Caco-2 (cell line): ENCODE measurements at regions of chr7 and their contacts with region 1.

Region 1: DNA sequence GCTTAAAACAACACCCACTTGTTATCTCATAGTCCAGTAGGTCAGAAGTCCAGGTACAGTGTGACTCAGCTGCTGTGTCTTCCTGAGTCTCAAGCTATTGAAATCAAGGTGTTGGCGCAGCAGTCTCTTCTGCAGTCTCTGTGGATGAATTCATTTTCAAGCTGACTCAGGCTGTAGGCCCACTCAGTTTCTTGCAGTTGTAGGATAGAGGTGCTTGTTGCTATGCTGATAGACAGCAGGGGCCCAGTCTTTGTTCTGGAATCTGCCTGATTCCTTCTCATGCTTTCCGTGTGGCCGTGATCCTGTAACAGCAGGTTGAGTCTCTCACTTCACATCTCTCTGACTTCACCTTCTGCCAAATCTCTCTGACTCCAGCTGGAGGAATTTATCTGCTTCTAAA is 400.4 kb upstream of the POM121L12 start:
- DNase-seq: peak; percentile 59 to 68
- H3K4me3 ChIP-seq: no peak overlapping the region
- H3K4me3 Mint-ChIP-seq: peak overlapping the region; percentile 53
- H3K27ac Mint-ChIP-seq: peak overlapping the region; percentile 75
- H3K4me1 ChIP-seq: peaks cover 12% of the 10 kb centered on the region; the same call in 1 of the 2 replicates
- H3K4me1 Mint-ChIP-seq: peaks cover 20% of the 10 kb centered on the region
- H3K27me3 ChIP-seq: no peaks in the 10 kb centered on the region
- H3K27me3 Mint-ChIP-seq: no peaks in the 10 kb centered on the region
- CTCF ChIP-seq: no peak

Region 2: GRCh38 chr7:52620849-52621248 is 14.2 kb before region 1 on chr7:
- CTCF ChIA-PET with region 1: no interaction called
- POLR2A ChIA-PET with region 1: no interaction called
- intact Hi-C with region 1: no loop called
- DNase-seq: no peak
- H3K4me3 ChIP-seq: no peak overlapping the region
- H3K4me3 Mint-ChIP-seq: no peak overlapping the region
- H3K27ac Mint-ChIP-seq: no peak overlapping the region
- H3K4me1 ChIP-seq: no peaks in the 10 kb centered on the region
- H3K4me1 Mint-ChIP-seq: no peaks in the 10 kb centered on the region
- H3K27me3 ChIP-seq: no peaks in the 10 kb centered on the region
- H3K27me3 Mint-ChIP-seq: no peaks in the 10 kb centered on the region
- CTCF ChIP-seq: no peak

Region 3: DNA sequence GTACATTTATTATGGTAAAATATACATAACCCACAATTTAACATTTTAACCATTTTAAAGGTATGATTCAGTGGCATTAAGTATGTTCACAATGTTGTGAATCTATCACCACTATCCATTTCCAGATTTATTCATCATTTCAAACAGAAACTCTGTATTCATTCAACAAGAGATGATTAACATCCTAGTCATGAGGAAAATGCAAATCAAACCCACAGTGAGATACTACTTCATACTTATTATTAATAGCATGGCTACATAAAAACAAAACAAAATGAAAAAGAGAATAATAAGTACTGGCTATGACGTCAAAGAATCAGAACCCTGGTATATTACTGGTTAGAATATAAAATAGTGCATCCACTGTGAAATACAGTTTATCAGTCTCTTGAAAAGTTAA is 13.9 kb after region 1 on chr7:
- CTCF ChIA-PET with region 1: no interaction called
- POLR2A ChIA-PET with region 1: no interaction called
- intact Hi-C with region 1: loop called (anchors 2 kb)
- DNase-seq: no peak
- H3K4me3 ChIP-seq: no peak overlapping the region
- H3K4me3 Mint-ChIP-seq: no peak overlapping the region
- H3K27ac Mint-ChIP-seq: no peak overlapping the region
- H3K4me1 ChIP-seq: no peaks in the 10 kb centered on the region
- H3K4me1 Mint-ChIP-seq: no peaks in the 10 kb centered on the region
- H3K27me3 ChIP-seq: no peaks in the 10 kb centered on the region
- H3K27me3 Mint-ChIP-seq: no peaks in the 10 kb centered on the region
- CTCF ChIP-seq: no peak